Mucosa of descending colon (tissue), 3 donors: ENCODE measurements at regions of chr15 and their contacts with region 1.

Region 1: GRCh38 chr15:76327191-76328105 is 9.1 kb upstream of the ISL2 start:
- DNase-seq: no peak
- ATAC-seq: no peak
- H3K4me3 ChIP-seq: no peak overlapping the region
- H3K4me1 ChIP-seq: no peaks in the 10 kb centered on the region
- CTCF ChIP-seq: no peak

Region 2: GRCh38 chr15:76206325-76206976 is 121.0 kb before region 1 on chr15:
- intact Hi-C with region 1: loop called in 1 of 2 experiments (anchors 10 kb)
- DNase-seq: peak in 2 of 3 donors; percentile 65 to 66
- ATAC-seq: peak; percentile 24
- H3K4me3 ChIP-seq: no peak overlapping the region
- H3K4me1 ChIP-seq: no peaks in the 10 kb centered on the region
- CTCF ChIP-seq: no peak